ENCODE measurements at regions of chr14 and their contacts with region 1.

Region 1: GRCh38 chr14:105375635-105376057 is 22.7 kb upstream of the TEX22 start:
- DNase-seq: peak; percentile 72
- ATAC-seq: peak; percentile 69
- H3K4me3 Mint-ChIP-seq: no peak overlapping the region
- H3K27ac Mint-ChIP-seq: peak overlapping the region; percentile 76
- H3K4me1 Mint-ChIP-seq: peaks cover 19% of the 10 kb centered on the region
- H3K27me3 Mint-ChIP-seq: no peaks in the 10 kb centered on the region

Region 2: DNA sequence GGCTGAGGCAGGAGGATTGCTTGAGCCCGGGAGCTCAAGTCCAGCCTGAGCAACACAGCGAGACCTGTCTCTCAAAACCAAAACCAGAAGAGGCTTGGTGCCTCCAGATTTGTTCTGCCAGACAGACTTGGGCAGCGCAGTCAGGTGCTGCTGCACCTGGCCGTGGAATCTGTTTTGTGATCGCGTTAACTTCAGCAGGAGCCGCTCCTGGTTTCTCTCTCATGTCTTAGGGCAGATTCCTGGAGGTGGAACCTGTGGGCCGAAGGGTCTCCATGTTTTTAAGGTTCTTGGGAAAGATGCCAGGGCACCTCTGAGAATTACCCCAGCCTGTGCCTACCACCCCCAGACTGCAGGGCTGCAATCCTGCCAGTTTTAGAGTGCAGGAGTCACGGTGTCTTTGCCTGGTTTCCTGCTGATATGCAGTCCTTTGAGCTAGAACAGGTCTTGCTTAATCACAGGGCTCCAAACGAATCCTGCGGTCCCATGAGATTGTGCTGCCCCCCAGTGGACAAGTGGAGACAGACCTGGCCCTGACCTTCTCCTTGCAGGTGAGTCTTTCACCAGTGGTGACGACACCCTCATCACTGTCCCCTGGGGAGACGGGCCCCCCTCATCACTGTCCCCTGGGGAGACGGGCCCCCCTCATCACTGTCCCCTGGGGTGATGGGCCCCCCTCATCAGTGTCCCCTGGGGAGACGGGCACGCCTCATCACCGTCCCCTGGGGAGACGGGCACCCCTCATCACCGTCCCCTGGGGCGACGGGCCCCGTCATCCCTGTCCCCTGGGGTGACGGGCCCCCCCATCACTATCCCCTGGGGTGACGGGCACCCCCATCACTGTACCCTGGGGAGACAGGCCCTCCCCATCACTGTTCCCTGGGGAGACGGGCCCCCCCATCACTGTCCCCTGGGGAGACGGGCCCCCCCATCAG is 23.5 kb before region 1 on chr14:
- CTCF ChIA-PET with region 1: no interaction called
- DNase-seq: peak; percentile 93
- ATAC-seq: peak; percentile 96
- H3K4me3 Mint-ChIP-seq: no peak overlapping the region
- H3K27ac Mint-ChIP-seq: no peak overlapping the region
- H3K4me1 Mint-ChIP-seq: peaks cover 2% of the 10 kb centered on the region
- H3K27me3 Mint-ChIP-seq: no peaks in the 10 kb centered on the region

Region 3: DNA sequence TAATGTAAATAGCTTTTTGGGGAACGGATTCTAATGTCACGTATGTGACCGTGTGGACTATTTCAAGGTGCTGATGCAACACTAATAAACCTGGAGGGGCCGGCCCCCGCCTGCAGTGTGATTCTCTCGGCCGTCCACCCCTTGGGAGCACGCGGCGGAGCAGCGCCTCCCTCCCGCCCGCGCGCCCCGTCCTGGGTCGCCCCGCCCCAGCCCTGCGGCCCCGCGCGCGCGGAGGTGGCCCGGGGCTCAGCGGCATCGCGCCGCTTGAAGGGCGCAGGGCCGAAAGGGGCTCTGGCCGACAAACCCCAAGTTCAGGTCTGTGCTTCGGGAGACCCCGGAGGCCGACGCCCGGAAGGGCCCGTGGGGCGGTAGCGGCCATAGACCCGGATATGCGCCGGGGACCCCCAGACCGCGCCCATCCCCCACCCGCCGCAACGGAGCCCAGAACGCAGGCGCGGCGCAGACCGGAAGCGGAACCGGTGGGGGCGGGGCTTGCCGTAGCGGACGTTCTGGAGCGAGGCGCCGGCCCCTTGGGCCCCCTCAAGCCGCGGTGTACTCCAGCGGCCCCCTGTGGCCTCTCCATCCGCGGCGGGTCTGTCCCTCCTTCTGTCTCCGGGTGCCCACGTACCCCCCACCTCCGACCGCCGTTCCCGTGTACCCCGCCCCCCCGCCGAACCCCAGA is 22.5 kb after region 1 on chr14 and contains the start of gene TEX22:
- CTCF ChIA-PET with region 1: interaction called, 17 read pairs
- DNase-seq: peak; percentile 93
- ATAC-seq: peak; percentile 90
- H3K4me3 Mint-ChIP-seq: peak within 1 kb of the TSS; percentile 90
- H3K27ac Mint-ChIP-seq: peak within 1 kb of the TSS; percentile 88
- H3K4me1 Mint-ChIP-seq: peaks cover 34% of the 10 kb centered on the region
- H3K27me3 Mint-ChIP-seq: no peaks in the 10 kb centered on the region
- total RNA-seq, gene TEX22: 3.4 to 3.7 TPM

Measured in activated CD8-positive, alpha-beta memory T cell treated with anti-CD3 and anti-CD28 coated beads, Interleukin-2, amount 10 ng/mL, durations not matched to agents 7 days and 5 days (primary cell).